A673 (cell line): ENCODE measurements at regions of chr12 and their contacts with region 1.

Region 1: DNA sequence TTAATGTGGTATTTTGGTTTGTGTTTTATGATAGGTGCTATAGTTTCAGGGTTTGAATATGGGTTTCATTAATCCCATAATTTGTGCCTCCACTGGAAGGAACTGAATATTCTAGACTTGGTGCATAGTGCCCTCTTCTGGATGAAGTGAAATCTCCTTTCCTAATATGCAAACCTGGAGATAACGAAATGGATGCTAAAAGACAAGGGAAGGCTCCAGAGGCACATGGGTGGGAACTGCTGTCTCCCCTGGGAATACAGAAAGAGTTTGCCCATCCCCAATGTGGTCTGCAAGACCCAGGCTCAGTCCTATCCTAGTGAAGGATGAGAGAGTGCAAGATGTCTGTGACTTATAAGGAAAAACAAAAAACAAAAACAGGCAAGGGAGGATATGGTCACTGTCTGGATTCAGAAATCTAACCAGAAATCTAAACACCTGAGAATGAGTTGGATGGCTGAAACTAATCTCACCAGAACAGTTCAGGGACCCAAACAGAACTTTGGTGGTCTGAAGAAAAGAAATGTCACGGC is 142.3 kb upstream of the TMPO start:
- DNase-seq: peak; percentile 89
- H3K4me3 ChIP-seq: no peak overlapping the region
- H3K27ac ChIP-seq: no peak overlapping the region
- H3K4me1 ChIP-seq: peaks cover 47% of the 10 kb centered on the region
- H3K27me3 ChIP-seq: no peaks in the 10 kb centered on the region
- CTCF ChIP-seq: peak; percentile 79

Region 2: DNA sequence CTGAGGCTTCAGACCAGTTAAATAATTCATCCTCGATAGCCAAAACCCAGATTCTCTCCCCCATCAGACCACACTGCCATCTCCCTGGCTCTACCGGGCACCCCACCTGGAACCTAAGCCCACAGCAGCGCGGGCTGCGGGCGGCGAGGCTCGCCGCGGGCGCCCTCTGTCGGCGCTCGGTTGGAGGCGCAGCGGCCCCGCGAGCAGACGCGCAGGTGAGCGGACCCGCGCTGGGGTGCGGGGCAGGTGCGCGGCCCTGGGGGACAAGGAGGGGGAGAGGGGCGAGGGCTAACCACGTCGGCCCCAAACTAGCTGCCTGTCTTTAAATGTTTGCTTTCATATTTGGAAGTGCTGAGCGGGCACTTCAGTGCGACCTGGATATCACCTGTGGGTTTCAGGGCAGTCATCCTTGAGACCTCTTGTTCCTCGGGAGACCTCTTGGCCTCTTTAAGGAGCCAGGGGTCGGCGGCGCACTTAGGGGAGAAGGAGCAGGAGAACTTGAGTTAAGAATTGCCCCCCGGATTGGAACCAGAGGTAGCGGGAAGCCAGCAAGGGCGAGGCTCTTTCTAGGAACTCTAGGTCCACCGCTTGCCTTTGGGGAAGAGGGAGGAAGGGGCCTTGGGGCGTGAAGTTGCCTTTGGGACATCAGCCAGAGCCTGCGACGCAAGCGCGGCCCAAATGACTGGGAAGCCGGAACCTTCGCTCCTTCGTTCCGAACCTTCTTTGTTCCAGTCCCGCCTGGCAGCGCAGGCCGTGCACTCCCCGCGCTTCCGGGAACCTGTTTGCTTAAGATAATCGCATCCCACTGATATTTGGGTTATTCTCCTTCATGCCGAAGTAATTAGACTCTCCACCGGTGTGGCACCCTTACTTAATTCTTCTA is 1387.4 kb before region 1 on chr12:
- CTCF ChIA-PET with region 1: no interaction called
- POLR2A ChIA-PET with region 1: no interaction called
- intact Hi-C with region 1: loop called (anchors 5 kb)
- DNase-seq: peak; percentile 15
- H3K4me3 ChIP-seq: peak overlapping the region; percentile 37
- H3K27ac ChIP-seq: no peak overlapping the region
- H3K4me1 ChIP-seq: no peaks in the 10 kb centered on the region
- H3K27me3 ChIP-seq: peaks cover 43% of the 10 kb centered on the region
- CTCF ChIP-seq: peak; percentile 75

Region 3: DNA sequence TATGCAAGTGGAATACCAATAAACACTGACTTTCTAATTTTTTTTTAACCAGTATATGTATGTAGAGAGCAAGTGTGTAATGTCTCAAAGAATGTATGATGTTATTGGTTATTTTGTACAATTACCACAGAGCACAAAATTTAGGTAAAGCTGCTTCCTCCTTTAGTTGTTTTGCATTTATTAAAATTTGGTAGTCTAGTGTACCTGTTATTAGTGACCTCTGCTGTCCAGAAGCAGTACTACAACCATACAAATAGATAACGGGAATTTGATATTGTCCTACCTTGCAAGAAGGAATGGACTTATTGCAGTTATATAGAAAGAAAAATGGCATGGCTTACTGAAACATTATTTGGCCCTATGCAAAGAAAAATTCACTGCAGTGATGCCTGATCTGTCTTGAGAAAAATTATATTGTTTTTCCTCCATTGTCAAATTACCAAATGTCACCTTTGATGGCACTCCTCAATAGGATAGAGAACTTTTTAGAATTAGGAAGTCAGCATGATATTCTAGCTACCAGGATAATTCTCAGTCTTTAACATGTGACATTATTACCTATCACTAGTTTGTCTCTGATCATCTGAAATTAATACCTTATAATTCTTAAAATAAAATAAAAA is 1064.4 kb before region 1 on chr12:
- CTCF ChIA-PET with region 1: no interaction called
- POLR2A ChIA-PET with region 1: no interaction called
- intact Hi-C with region 1: loop called (anchors 5 kb)
- DNase-seq: peak; percentile 52
- H3K4me3 ChIP-seq: no peak overlapping the region
- H3K27ac ChIP-seq: no peak overlapping the region
- H3K4me1 ChIP-seq: no peaks in the 10 kb centered on the region
- H3K27me3 ChIP-seq: peaks cover 52% of the 10 kb centered on the region
- CTCF ChIP-seq: peak; percentile 76

Region 4: DNA sequence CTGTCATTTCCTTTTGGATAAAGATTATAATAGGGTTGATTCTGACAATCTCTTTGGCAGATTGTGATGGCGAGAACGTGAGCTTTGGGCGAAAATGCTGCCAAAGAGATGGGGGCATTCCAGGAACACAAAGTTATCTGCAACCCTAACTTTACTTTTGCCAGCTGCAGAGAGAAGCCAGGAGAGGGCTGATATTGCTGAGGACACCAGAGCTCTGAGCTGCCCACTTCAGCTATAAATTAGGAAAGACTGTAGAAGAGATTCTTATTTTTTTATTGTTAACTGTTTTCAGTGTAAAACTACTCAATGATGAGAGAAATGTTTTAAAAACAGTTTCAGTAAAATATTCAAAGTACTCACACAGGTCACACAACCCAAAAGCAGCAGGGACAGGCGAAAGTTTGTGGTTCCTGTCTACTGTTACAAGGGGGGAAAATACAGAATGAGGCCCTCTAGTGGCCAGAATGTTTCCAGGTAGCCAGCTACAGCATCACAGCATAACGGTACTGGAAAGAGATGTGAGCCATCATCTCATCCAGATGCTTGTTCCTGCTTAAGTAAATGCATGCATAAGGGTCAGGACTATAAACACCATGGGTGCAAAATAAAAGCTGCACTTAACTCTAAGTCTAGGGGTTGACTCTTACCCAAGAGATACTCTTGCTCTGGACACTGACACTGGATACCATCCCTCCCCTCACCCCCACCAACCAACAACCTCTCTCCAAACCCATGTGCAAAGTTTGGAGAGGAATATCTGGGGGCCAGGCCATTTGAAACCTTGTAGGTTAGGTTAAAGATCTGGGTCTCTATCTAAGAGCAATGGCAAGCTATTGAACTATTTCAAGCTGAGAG is 412.1 kb before region 1 on chr12:
- CTCF ChIA-PET with region 1: no interaction called
- POLR2A ChIA-PET with region 1: no interaction called
- intact Hi-C with region 1: loop called (anchors 5 kb)
- DNase-seq: peak; percentile 56
- H3K4me3 ChIP-seq: no peak overlapping the region
- H3K27ac ChIP-seq: no peak overlapping the region
- H3K4me1 ChIP-seq: no peaks in the 10 kb centered on the region
- H3K27me3 ChIP-seq: no peaks in the 10 kb centered on the region
- CTCF ChIP-seq: peak; percentile 89

Region 5: DNA sequence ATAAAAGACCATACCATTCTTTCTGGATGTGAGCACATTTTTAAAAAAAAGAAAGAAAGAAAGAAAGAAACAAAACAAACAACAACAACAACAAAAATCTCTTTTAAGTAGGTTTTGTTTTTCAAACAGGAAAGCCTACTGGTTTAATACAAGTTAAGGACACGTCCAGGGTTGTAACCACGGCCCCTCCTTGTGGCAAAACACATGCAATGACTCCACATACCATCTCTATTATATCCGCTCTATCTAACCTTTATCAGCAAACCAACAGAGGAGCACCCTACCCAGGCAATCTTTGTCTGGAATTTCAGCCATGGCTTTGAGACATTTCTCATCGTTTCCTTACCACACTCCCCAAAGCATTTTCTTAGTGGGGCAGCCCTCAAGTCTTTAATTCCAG is 218.2 kb before region 1 on chr12:
- CTCF ChIA-PET with region 1: no interaction called
- POLR2A ChIA-PET with region 1: no interaction called
- intact Hi-C with region 1: loop called (anchors 5 kb)
- DNase-seq: peak; percentile 77
- H3K4me3 ChIP-seq: no peak overlapping the region
- H3K27ac ChIP-seq: no peak overlapping the region
- H3K4me1 ChIP-seq: peaks cover 36% of the 10 kb centered on the region
- H3K27me3 ChIP-seq: no peaks in the 10 kb centered on the region
- CTCF ChIP-seq: peak; percentile 74